GM18951 (cell line): ENCODE measurements at regions of chrX and their contacts with region 1.

Region 1: DNA sequence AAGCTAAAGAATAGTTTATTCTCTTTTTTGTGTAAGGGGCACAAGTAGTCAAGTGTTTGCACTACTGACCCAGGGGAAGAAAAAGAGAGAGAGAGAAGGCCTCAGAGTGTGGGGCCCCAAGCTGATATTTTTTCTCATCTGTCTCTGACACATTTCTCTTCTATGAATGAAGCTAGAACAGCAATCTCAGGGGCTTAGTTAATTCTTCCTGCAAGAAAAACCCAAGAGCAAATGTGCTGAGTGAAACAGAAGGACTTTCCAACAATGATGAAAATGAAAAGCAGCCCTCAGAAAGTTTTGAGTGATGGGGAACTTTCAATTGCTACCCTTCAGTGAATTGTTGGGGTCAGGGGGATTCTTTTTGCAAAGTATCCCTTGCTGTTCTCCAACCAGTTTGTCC is 9.2 kb upstream of the MSN start:
- POLR2A ChIP-seq: no peak

Region 2: GRCh38 chrX:65601530-65602220 is 56.6 kb before region 1 on chrX:
- in situ Hi-C with region 1: loop called (anchors 10 kb)
- POLR2A ChIP-seq: no peak

Region 3: DNA sequence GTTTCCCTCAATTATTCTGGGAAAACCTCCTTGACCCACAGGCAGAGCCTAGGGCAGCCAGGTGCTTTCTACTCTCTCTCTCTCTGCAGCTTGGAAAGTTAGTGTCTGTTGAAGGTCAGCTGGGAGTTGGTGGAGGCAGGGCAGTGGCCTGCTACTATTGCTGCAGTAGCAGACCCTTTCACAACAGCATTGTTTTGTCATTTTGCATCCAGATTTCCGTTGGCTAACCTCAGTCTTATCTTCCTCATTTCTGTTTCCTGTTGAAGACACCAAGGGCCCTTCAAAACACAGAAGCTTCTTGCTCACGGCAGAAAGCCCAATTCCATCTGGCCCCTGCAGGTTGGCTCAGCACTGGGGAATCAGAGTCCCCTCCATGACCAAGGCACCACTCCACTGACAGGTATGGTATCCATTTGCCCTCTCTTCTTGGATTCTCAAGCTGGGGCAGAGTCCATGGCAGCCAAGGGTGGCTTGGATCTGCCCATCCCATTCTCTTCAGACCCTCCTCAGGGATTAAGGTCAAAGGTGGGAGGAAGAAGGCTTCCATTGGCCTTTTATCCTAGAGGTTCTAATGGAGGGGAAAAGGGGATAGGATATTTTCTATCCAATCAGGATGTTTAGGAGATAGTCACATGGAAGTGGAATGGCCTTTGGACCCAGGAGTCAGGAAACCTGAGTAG is 357.1 kb after region 1 on chrX:
- in situ Hi-C with region 1: no loop called
- POLR2A ChIP-seq: peak; percentile 32